ENCODE measurements at regions of chrX and their contacts with region 1.

Region 1: GRCh38 chrX:56729152-56729850 is at the start of gene NBDY:
- DNase-seq: peak; percentile 41
- ATAC-seq: peak; percentile 73
- H3K4me3 Mint-ChIP-seq: peak within 1 kb of the TSS; percentile 83
- H3K27ac Mint-ChIP-seq: peak within 1 kb of the TSS; percentile 91
- H3K4me1 Mint-ChIP-seq: peaks cover 24% of the 10 kb centered on the region
- H3K27me3 Mint-ChIP-seq: no peaks in the 10 kb centered on the region
- total RNA-seq, gene NBDY: 37.0 to 53.3 TPM

Region 2: GRCh38 chrX:55717521-55718497 is 1011.5 kb before region 1 on chrX and contains the start of gene RRAGB:
- CTCF ChIA-PET with region 1: no interaction called
- POLR2A ChIA-PET with region 1: no interaction called
- intact Hi-C with region 1: loop called in 1 of 2 experiments (anchors 5 kb)
- DNase-seq: peak; percentile 93
- ATAC-seq: peak; percentile 99
- H3K4me3 Mint-ChIP-seq: peak within 1 kb of the TSS; percentile 87
- H3K27ac Mint-ChIP-seq: peak within 1 kb of the TSS; percentile 87
- H3K4me1 Mint-ChIP-seq: peaks cover 33% of the 10 kb centered on the region
- H3K27me3 Mint-ChIP-seq: no peaks in the 10 kb centered on the region
- total RNA-seq, gene RRAGB: 4.3 to 5.0 TPM

Region 3: GRCh38 chrX:55907968-55908607 is 821.2 kb before region 1 on chrX:
- CTCF ChIA-PET with region 1: no interaction called
- POLR2A ChIA-PET with region 1: no interaction called
- intact Hi-C with region 1: loop called in 1 of 2 experiments (anchors 5 kb)
- DNase-seq: peak; percentile 71
- ATAC-seq: peak; percentile 75
- H3K4me3 Mint-ChIP-seq: peak overlapping the region; percentile 79
- H3K27ac Mint-ChIP-seq: peak overlapping the region; percentile 90
- H3K4me1 Mint-ChIP-seq: peaks cover 17% of the 10 kb centered on the region
- H3K27me3 Mint-ChIP-seq: no peaks in the 10 kb centered on the region

Region 4: DNA sequence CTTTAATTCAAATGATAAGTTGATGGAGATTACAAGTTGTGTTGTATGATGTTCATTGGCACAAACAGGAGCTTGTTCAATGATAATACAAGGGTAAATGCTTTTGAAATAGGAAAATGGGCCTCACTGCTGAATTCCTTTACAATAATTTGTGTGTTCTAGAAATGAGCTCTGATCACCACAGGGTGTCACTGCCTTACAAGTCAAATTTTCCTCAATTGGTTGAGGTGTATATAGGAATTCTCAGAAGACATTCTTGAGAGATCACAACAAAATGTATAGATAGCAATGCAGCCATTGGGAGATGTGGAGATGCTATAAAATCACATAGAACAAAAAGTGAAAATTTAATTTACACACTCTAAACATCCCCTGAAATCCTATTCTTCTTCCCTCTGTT is 447.5 kb before region 1 on chrX:
- CTCF ChIA-PET with region 1: interaction called, 33 read pairs
- POLR2A ChIA-PET with region 1: no interaction called
- intact Hi-C with region 1: loop called (anchors 1 to 2 kb)
- DNase-seq: no peak
- ATAC-seq: no peak
- H3K4me3 Mint-ChIP-seq: no peak overlapping the region
- H3K27ac Mint-ChIP-seq: no peak overlapping the region
- H3K4me1 Mint-ChIP-seq: peaks cover 6% of the 10 kb centered on the region
- H3K27me3 Mint-ChIP-seq: no peaks in the 10 kb centered on the region

Region 5: DNA sequence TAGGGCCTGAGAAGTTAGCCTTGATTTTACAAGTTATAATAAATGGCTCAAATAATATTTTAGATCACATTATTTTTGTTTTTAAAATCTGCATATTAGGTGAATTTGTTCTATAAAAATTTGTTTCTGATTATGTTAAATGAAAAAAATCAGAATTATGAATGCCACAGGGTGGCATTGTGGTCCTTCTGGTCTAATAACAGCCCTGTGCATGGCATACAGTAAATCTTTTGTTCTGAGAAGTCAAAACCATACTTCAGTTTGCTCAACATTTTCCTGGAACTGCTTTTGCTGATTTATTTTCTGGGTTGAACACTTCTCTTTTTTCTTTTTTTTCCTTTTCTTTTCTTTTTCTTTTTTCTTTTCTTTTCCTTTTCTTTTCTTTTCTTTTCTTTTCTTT is 266.9 kb before region 1 on chrX:
- CTCF ChIA-PET with region 1: interaction called, 4 read pairs
- POLR2A ChIA-PET with region 1: no interaction called
- intact Hi-C with region 1: loop called (anchors 2 kb)
- DNase-seq: no peak
- ATAC-seq: no peak
- H3K4me3 Mint-ChIP-seq: no peak overlapping the region
- H3K27ac Mint-ChIP-seq: no peak overlapping the region
- H3K4me1 Mint-ChIP-seq: peaks cover 5% of the 10 kb centered on the region
- H3K27me3 Mint-ChIP-seq: no peaks in the 10 kb centered on the region

Measured in activated CD4-positive, alpha-beta T cell treated with anti-CD3 and anti-CD28 coated beads for 36 hours (primary cell).